ENCODE measurements at regions of chr3 and their contacts with region 1.

Region 1: GRCh38 chr3:141192345-141192744 is 39.3 kb upstream of the PXYLP1 start:
- DNase-seq: peak; percentile 87 to 96 (median 93)
- H3K4me3 ChIP-seq: no peak overlapping the region
- H3K4me3 Mint-ChIP-seq: no peak overlapping the region
- H3K27ac ChIP-seq: no peak overlapping the region
- H3K27ac Mint-ChIP-seq: peak overlapping the region in 5 of 8 donors; percentile 0 to 85 (median 23)
- H3K4me1 ChIP-seq: no peaks in the 10 kb centered on the region
- H3K4me1 Mint-ChIP-seq: peaks cover 5 to 13% (median 11%) of the 10 kb centered on the region in 3 donors
- H3K27me3 ChIP-seq: peaks cover 7% of the 10 kb centered on the region
- H3K27me3 Mint-ChIP-seq: peaks cover 25 to 30% of the 10 kb centered on the region in 2 donors

Region 2: GRCh38 chr3:140870370-140870769 is 322.0 kb before region 1 on chr3:
- CTCF ChIA-PET with region 1: no interaction called
- POLR2A ChIA-PET with region 1: no interaction called
- DNase-seq: no peak
- H3K4me3 ChIP-seq: no peak overlapping the region
- H3K4me3 Mint-ChIP-seq: no peak overlapping the region
- H3K27ac ChIP-seq: no peak overlapping the region
- H3K27ac Mint-ChIP-seq: no peak overlapping the region
- H3K4me1 ChIP-seq: no peaks in the 10 kb centered on the region
- H3K4me1 Mint-ChIP-seq: no peaks in the 10 kb centered on the region
- H3K27me3 ChIP-seq: no peaks in the 10 kb centered on the region
- H3K27me3 Mint-ChIP-seq: peaks cover 12 to 24% of the 10 kb centered on the region in 2 donors

Region 3: GRCh38 chr3:140898340-140899180 is 293.8 kb before region 1 on chr3:
- CTCF ChIA-PET with region 1: interaction called, 13 read pairs
- POLR2A ChIA-PET with region 1: no interaction called
- DNase-seq: peak in 2 of 5 donors; percentile 12 to 31
- H3K4me3 ChIP-seq: no peak overlapping the region
- H3K4me3 Mint-ChIP-seq: no peak overlapping the region
- H3K27ac ChIP-seq: no peak overlapping the region
- H3K27ac Mint-ChIP-seq: no peak overlapping the region
- H3K4me1 ChIP-seq: no peaks in the 10 kb centered on the region
- H3K4me1 Mint-ChIP-seq: no peaks in the 10 kb centered on the region
- H3K27me3 ChIP-seq: peaks cover 6% of the 10 kb centered on the region
- H3K27me3 Mint-ChIP-seq: peaks cover 20 to 42% of the 10 kb centered on the region in 2 donors

Region 4: DNA sequence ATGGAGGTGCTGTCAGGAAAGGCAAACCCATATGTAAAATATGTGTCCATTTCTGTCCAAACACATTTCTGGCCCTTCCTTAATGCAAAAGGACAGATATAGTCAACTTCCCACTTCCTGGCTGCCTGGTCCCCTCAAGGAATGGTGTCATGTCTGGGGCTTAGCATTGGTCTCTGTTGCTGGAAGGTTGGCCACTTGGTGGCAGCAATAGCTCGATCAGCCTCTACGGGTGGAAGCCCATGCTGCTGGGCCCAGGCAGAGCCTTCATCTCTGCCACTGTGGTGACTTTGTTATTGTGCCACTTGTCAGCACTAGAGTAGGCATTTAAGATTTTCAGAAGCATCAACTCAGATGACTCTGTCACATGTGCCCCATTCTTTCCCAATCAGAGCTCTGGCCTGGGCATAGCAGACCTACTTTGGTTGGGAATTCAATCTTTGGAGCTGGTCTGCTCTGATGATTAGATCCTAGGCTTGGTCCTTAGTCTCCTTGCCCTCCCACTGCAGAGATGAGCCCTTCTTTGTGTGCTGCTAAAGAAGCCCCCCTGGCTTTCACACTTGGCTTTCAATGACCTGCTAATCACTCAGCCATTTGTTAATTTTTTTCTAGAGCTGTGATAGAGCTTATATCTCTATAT is 192.2 kb before region 1 on chr3:
- CTCF ChIA-PET with region 1: interaction called, 24 read pairs
- POLR2A ChIA-PET with region 1: no interaction called
- DNase-seq: peak; percentile 13 to 58 (median 27)
- H3K4me3 ChIP-seq: no peak overlapping the region
- H3K4me3 Mint-ChIP-seq: no peak overlapping the region
- H3K27ac ChIP-seq: no peak overlapping the region
- H3K27ac Mint-ChIP-seq: no peak overlapping the region
- H3K4me1 ChIP-seq: no peaks in the 10 kb centered on the region
- H3K4me1 Mint-ChIP-seq: peaks cover 2 to 5% (median 4%) of the 10 kb centered on the region in 3 donors
- H3K27me3 ChIP-seq: no peaks in the 10 kb centered on the region
- H3K27me3 Mint-ChIP-seq: peaks cover 3 to 12% of the 10 kb centered on the region in 2 donors

Region 5: DNA sequence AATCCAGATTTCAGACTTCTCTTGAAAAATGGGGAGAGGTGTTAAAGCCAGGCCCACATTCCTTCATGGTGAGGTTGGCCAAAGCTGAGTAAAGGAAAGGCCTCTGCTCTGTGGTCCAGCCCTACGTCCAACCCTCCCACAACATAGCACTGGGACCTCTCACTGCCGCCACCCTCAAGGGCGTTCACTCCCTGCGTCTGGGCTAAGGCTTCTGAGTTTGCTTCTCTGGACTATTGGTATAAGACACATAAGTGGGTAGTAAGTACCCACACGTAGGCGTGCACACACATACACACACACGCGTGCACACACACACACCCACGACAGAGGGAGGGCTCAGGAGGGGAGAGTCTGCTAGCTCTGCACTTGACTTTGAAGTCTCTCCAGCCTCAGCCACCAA is 40.9 kb before region 1 on chr3:
- CTCF ChIA-PET with region 1: no interaction called
- POLR2A ChIA-PET with region 1: no interaction called
- DNase-seq: no peak
- H3K4me3 ChIP-seq: no peak overlapping the region
- H3K4me3 Mint-ChIP-seq: no peak overlapping the region
- H3K27ac ChIP-seq: no peak overlapping the region
- H3K27ac Mint-ChIP-seq: no peak overlapping the region
- H3K4me1 ChIP-seq: no peaks in the 10 kb centered on the region
- H3K4me1 Mint-ChIP-seq: no peaks in the 10 kb centered on the region
- H3K27me3 ChIP-seq: no peaks in the 10 kb centered on the region
- H3K27me3 Mint-ChIP-seq: peaks cover 15 to 28% of the 10 kb centered on the region in 2 donors

Region 6: DNA sequence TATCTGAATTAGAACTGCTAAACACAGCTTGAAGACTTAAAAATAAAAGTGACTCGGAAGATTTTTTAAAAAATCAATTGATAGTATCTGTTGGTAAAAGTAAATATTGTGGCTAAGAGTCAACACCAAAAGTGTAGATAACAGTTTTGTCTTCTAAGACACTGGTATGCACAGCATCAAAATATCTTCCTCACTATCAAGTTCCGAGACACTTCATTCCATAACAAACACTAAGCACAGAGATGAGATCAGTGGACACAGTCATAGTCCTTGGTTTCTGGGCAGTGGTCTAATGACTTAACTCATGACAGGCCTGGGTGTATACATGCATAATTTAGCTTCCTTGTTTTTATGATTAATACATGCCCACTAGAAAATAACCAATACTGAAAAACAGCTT is 102.5 kb after region 1 on chr3:
- CTCF ChIA-PET with region 1: no interaction called
- POLR2A ChIA-PET with region 1: no interaction called
- DNase-seq: no peak
- H3K4me3 ChIP-seq: peak overlapping the region; percentile 20
- H3K4me3 Mint-ChIP-seq: peak overlapping the region; percentile 19 to 86 (median 82)
- H3K27ac ChIP-seq: no peak overlapping the region
- H3K27ac Mint-ChIP-seq: peak overlapping the region; percentile 3 to 90 (median 79)
- H3K4me1 ChIP-seq: peaks cover 16% of the 10 kb centered on the region
- H3K4me1 Mint-ChIP-seq: peaks cover 21 to 24% (median 21%) of the 10 kb centered on the region in 3 donors
- H3K27me3 ChIP-seq: no peaks in the 10 kb centered on the region
- H3K27me3 Mint-ChIP-seq: no peaks in the 10 kb centered on the region